CD8-positive, alpha-beta T cell (primary cell): ENCODE measurements at regions of chr11 and their contacts with region 1.

Region 1: DNA sequence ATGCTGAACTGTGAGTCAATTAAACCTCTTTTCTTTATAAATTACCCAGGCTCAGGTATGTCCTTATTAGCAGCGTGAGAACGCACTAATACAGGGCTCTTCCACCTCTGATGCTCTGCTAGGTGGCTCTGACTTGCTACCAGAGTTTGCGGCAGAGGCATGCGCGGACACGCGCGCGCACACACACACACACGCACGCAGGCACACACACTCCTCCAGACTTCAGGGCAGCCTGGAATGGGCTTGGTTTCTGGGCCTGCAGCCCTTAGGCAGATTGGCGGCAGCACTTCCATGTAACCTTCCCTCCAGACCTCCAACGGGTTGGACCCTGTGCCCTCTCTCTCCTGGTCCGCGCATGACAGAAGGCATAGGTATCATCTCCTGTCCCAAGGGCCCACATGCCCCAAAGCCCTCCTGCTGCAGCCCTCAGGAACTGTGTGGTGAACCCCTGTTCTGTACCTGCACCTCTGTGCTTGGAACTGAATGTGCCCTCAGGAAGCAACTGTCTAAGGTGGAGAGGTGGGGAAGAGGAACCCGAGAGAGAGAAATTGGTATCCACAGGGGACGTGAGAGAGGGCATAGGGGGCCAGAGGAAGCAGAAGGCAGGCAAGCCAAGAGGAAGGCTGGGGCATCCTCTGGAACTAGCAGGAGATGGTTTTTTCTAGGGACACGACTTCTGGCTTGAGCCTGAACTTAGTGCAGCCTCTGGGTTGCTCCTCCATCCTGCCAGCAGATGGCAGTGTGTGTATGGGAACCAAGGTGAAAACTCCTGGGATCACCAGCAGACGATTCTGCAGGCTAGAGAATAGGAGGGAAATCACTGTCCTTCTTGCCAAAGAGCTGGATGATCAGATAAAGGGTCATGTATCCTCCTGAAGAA is 23.4 kb upstream of the RIC3 start:
- DNase-seq: peak in 6 of 9 experiments; percentile 6 to 55 (median 38)
- ATAC-seq: no peak
- H3K4me3 ChIP-seq: no peak overlapping the region
- H3K4me3 Mint-ChIP-seq: no peak overlapping the region
- H3K27ac ChIP-seq: no peak overlapping the region
- H3K27ac Mint-ChIP-seq: no peak overlapping the region
- H3K4me1 ChIP-seq: no peaks in the 10 kb centered on the region
- H3K4me1 Mint-ChIP-seq: no peaks in the 10 kb centered on the region
- H3K27me3 ChIP-seq: no peaks in the 10 kb centered on the region
- H3K27me3 Mint-ChIP-seq: peaks cover 16% of the 10 kb centered on the region
- CTCF ChIP-seq: peak; percentile 70

Region 2: GRCh38 chr11:7257724-7258123 is 934.5 kb before region 1 on chr11:
- CTCF ChIA-PET with region 1: no interaction called
- POLR2A ChIA-PET with region 1: no interaction called
- intact Hi-C with region 1: no loop called
- DNase-seq: no peak
- ATAC-seq: no peak
- H3K4me3 ChIP-seq: no peak overlapping the region
- H3K4me3 Mint-ChIP-seq: no peak overlapping the region
- H3K27ac ChIP-seq: no peak overlapping the region
- H3K27ac Mint-ChIP-seq: no peak overlapping the region
- H3K4me1 ChIP-seq: no peaks in the 10 kb centered on the region
- H3K4me1 Mint-ChIP-seq: no peaks in the 10 kb centered on the region
- H3K27me3 ChIP-seq: no peaks in the 10 kb centered on the region
- H3K27me3 Mint-ChIP-seq: peaks cover 31% of the 10 kb centered on the region
- CTCF ChIP-seq: no peak

Region 3: DNA sequence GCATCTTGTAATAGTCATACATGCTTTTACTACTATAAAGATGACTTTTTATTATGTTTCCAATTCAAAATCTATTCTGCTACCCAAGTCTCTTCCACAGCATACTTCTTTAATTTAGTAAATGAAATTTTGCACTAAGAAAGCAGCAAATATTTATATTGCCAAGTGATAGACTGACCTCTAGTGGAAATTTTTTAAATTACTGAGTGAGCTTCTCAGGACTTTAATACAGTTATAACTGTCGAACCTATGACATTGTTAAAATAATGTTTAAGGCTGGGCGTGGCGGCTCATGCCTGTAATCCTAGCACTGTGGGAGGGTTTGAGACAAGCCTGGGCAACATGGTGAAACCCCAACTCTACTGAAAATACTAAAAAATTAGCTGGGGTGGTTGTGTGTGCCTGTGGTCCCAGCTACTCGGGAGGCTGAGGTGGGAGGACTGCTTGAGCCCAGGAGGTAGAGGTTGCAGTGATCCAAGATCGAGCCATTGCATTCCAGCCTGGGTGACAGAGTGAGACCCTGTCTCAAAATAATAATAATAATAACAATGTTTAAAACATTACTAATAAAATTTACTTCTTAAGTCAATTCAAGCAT is 374.5 kb after region 1 on chr11:
- CTCF ChIA-PET with region 1: interaction called, 18 read pairs
- POLR2A ChIA-PET with region 1: no interaction called
- intact Hi-C with region 1: loop called in 1 of 2 experiments (anchors 1 kb)
- DNase-seq: peak in 2 of 9 experiments; percentile 31 to 47
- ATAC-seq: no peak
- H3K4me3 ChIP-seq: no peak overlapping the region
- H3K4me3 Mint-ChIP-seq: no peak overlapping the region
- H3K27ac ChIP-seq: no peak overlapping the region
- H3K27ac Mint-ChIP-seq: no peak overlapping the region
- H3K4me1 ChIP-seq: no peaks in the 10 kb centered on the region
- H3K4me1 Mint-ChIP-seq: no peaks in the 10 kb centered on the region
- H3K27me3 ChIP-seq: peaks cover 0 to 3% of the 10 kb centered on the region in 2 experiments
- H3K27me3 Mint-ChIP-seq: peaks cover 17% of the 10 kb centered on the region
- CTCF ChIP-seq: peak; percentile 79

Region 4: GRCh38 chr11:8813658-8814057 is 621.4 kb after region 1 on chr11:
- CTCF ChIA-PET with region 1: no interaction called
- POLR2A ChIA-PET with region 1: no interaction called
- intact Hi-C with region 1: loop called in 1 of 2 experiments (anchors 5 kb)
- DNase-seq: peak in 7 of 9 experiments; percentile 4 to 53 (median 38)
- ATAC-seq: no peak
- H3K4me3 ChIP-seq: no peak overlapping the region
- H3K4me3 Mint-ChIP-seq: no peak overlapping the region
- H3K27ac ChIP-seq: no peak overlapping the region
- H3K27ac Mint-ChIP-seq: no peak overlapping the region
- H3K4me1 ChIP-seq: peaks cover 7% of the 10 kb centered on the region
- H3K4me1 Mint-ChIP-seq: peaks cover 8% of the 10 kb centered on the region
- H3K27me3 ChIP-seq: no peaks in the 10 kb centered on the region
- H3K27me3 Mint-ChIP-seq: peaks cover 12% of the 10 kb centered on the region
- CTCF ChIP-seq: peak; percentile 51